Ascending aorta (tissue), 2 donors: ENCODE measurements at regions of chr2 and their contacts with region 1.

Region 1: DNA sequence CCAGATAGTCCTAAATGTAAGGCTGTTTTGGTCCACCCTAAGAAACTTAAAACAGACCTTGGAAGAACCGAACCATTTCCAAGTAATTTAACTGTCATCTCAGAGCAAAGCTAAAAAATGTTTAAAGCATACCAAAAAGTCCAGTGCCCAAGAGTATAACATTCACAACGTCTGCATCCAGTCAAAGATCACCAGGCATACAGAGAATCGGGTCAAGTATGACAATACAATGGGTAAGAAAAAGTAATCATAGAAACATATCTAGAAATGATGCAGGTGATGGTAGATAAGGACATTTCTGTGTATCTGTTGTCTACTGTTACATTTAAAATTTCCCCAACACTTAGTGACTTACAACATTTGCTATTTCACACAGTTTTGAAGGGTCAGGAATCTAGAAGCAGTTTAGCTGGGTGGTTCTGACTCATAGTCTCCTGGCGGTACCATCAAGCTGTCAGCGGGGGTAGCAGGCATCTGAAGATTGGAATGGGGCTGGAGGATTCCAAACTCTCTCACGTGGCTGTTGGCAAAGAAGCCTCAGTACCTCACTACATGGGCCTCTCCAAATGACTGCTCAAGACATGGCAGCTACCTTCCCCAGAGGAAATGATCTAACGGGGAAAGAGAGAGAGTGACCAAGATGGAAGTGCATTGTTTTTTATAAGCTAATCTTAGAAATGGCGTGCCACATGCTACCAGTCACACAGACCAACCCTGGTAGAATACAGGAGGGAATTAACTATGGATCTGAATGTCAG is 36.6 kb upstream of the DYNC2LI1 start:
- DNase-seq: peak in 1 of 2 donors; percentile 86
- H3K4me3 ChIP-seq: no peak overlapping the region
- H3K27ac ChIP-seq: peak overlapping the region; percentile 48 to 51
- H3K4me1 ChIP-seq: peaks cover 0 to 7% of the 10 kb centered on the region in 2 donors
- H3K27me3 ChIP-seq: no peaks in the 10 kb centered on the region
- CTCF ChIP-seq: no peak

Region 2: DNA sequence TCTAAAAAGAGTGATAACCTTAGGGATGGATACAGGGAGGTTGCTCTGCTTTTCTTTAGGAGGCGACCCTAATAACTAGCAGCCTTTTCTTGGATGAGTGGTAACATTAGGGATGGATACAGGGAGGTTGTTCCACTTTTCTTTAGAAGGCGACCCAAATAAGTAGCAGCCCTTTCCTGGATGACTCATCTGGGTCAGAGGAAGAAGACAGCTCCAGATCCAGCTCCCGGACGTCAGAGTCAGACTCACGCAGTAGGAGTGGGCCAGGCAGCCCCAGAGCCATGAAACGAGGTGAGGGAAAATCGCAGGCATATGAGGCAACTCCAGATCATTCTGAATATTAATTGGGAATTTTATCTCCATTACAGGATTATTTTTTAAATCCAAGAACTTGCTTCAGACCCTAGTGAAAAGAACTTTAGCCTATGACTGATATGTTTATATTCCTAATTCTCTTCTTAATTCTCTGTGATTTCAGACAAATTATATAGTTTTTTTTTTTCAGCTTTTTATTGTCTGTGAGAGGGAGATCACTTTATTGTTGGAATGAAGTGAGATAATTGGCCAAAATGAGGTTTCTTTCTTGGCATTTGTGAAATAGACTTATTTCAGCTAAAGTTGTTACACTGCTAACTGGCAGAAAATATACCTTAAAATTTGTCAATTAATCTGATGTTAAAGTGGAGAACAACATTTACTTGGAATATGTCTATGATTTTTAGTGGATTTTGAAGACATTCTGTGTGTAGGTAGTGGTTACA is 29.8 kb before region 1 on chr2:
- intact Hi-C with region 1: no loop called
- DNase-seq: peak in 1 of 2 donors; percentile 66
- H3K4me3 ChIP-seq: no peak overlapping the region
- H3K27ac ChIP-seq: no peak overlapping the region
- H3K4me1 ChIP-seq: no peaks in the 10 kb centered on the region
- H3K27me3 ChIP-seq: no peaks in the 10 kb centered on the region
- CTCF ChIP-seq: no peak

Region 3: DNA sequence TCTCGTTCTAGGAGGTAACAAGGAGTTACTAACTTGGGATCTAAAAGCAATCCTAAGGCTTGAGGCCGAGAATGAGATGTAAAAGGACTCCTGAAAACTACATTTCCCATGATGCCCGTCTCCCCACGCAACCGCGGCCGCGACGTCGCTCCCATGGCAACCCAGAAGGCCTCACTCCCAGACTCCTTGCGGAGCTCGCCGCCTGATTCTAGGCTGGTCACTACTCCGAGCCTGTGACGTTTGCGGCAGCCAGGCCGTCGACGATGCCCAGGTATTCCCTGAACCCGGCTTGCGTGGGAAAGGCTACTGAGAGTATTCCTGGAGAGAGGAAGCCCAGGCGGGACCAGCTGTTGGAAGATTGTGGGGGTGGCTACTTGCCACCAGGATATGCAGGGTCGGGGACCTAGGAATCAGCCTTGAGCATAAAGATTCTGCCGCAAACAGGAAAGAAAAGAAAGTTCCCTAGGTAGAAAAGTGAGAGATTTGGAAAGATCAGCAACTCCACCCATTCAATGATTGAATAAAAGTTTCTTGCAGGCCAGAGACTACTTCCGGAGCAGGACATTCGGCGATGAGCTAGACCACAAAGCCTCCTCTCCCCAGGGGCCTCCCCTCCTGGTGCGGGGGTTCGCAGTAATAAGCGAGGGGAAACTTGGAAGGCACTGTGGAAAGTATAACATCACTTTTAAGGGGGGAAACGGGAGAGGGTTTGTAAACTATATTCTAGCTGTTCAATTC is 36.8 kb after region 1 on chr2 and contains the start of gene DYNC2LI1:
- intact Hi-C with region 1: loop called (anchors 5 kb)
- DNase-seq: peak; percentile 78 to 96
- H3K4me3 ChIP-seq: peak within 1 kb of the TSS; percentile 60 to 85
- H3K27ac ChIP-seq: peak within 1 kb of the TSS; percentile 82 to 87
- H3K4me1 ChIP-seq: no peaks in the 10 kb centered on the region
- H3K27me3 ChIP-seq: no peaks in the 10 kb centered on the region
- CTCF ChIP-seq: no peak
- total RNA-seq, gene DYNC2LI1: 2.9 TPM